PC-3 (cell line): ENCODE measurements at regions of chr20 and their contacts with region 1.

Region 1: GRCh38 chr20:34254979-34255378 is 13.8 kb downstream of the ASIP start:
- DNase-seq: no peak
- ATAC-seq: no peak
- H3K4me3 ChIP-seq: no peak overlapping the region
- H3K27ac ChIP-seq: no peak overlapping the region
- H3K4me1 ChIP-seq: no peaks in the 10 kb centered on the region
- H3K27me3 ChIP-seq: no peaks in the 10 kb centered on the region
- CTCF ChIP-seq: no peak

Region 2: GRCh38 chr20:33984182-33984719 is 270.7 kb before region 1 on chr20:
- CTCF ChIA-PET with region 1: no interaction called
- POLR2A ChIA-PET with region 1: no interaction called
- intact Hi-C with region 1: no loop called
- DNase-seq: no peak
- ATAC-seq: no peak
- H3K4me3 ChIP-seq: no peak overlapping the region
- H3K27ac ChIP-seq: no peak overlapping the region
- H3K4me1 ChIP-seq: no peaks in the 10 kb centered on the region
- H3K27me3 ChIP-seq: peaks cover 23% of the 10 kb centered on the region; the same call in 1 of the 2 replicates
- CTCF ChIP-seq: no peak

Region 3: DNA sequence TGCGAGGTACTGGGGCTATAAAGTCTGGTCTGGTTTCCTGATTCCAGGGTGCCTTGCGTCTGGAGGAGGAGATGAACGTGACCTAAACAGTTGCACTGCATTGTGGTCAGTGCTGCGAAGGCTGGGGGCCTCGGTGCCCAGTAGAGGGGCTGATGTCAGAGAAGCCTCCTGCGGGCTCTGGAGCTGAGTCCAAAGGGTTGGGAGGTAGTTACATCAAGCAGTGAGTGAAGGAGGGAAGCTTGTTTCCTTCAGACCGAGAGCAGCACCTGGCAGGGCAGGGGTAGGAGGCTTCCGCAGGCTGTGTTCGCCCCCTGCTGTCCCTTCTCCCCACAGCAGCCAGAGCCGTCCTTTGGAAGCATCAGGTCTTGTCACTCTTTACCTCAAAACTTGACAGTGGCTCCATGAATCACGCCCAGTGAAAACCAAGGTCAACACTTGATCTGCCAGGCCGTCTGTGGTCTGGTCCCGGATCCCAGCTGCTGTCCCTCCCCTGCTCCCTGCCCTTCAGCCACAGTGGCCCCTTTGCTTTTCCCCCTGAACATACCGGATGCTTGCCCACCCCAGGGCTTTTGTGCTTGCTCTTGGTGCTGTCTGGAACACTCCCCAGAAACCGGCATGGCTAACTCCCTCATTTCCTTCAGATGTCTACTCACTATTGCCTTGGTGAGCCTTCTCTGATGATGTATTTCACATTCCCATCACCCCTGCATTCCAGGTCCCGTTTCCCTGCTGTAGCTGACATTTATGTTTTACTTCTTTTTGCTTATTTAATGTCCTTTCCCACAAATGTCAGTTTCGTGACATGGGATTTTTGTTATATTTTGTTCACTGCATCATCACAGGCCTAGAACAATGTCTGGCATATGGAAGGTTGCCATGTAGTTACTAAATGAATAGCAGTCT is 268.2 kb after region 1 on chr20:
- CTCF ChIA-PET with region 1: no interaction called
- POLR2A ChIA-PET with region 1: no interaction called
- intact Hi-C with region 1: loop called (anchors 5 kb)
- DNase-seq: peak; percentile 87
- ATAC-seq: peak; percentile 50
- H3K4me3 ChIP-seq: no peak overlapping the region
- H3K27ac ChIP-seq: peak overlapping the region; percentile 43
- H3K4me1 ChIP-seq: peaks cover 44% of the 10 kb centered on the region
- H3K27me3 ChIP-seq: no peaks in the 10 kb centered on the region
- CTCF ChIP-seq: peak; percentile 92